GM23248 (cell line): ENCODE measurements at regions of chr1 and their contacts with region 1.

Region 1: GRCh38 chr1:179809506-179810366 is 66.6 kb downstream of the FAM163A start:
- DNase-seq: peak; percentile 78
- H3K4me3 ChIP-seq: no peak overlapping the region
- H3K27ac ChIP-seq: no peak overlapping the region
- H3K4me1 ChIP-seq: no peaks in the 10 kb centered on the region
- H3K27me3 ChIP-seq: peaks cover 15% of the 10 kb centered on the region; the same call in 1 of the 2 replicates

Region 2: GRCh38 chr1:179575497-179576314 is 234.0 kb before region 1 on chr1 and contains the start of gene NPHS2:
- in situ Hi-C with region 1: no loop called
- DNase-seq: no peak
- H3K4me3 ChIP-seq: no peak within 1 kb of the TSS
- H3K27ac ChIP-seq: no peak within 1 kb of the TSS
- H3K4me1 ChIP-seq: no peaks in the 10 kb centered on the region
- H3K27me3 ChIP-seq: peaks cover 37% of the 10 kb centered on the region
- total RNA-seq, gene NPHS2: not detected in 2 replicates

Region 3: DNA sequence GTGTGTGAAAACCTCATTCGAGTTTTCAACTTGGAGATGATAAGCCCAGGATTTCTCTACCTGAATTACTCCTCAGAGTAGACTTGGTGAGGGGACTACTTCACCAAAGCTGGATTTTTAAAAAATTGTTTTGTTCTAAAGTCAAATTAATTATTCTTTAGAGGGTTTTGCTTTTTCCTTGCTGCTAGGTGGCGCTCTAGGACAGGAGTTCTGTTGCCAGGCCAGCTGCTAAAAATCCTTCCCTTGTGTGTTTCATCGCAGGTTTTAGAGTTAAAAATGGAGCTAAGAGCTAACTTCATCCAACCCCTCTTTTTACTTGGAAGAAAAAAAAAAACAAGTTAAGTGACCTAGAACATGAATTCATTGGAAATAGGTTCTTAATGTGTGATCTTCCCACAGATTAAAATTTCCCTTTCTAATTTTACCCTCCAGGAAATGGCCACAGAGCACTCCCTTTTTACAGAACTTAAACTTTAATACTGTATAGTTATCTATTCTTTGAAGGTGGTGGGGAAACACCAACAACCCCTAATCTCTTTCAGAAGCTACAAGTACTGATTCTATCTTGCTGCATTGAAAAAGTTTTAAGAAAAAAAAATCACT is 103.3 kb before region 1 on chr1:
- in situ Hi-C with region 1: loop called (anchors 5 kb)
- DNase-seq: peak; percentile 70
- H3K4me3 ChIP-seq: no peak overlapping the region
- H3K27ac ChIP-seq: no peak overlapping the region
- H3K4me1 ChIP-seq: peaks cover 5% of the 10 kb centered on the region; the same call in 1 of the 2 replicates
- H3K27me3 ChIP-seq: peaks cover 9% of the 10 kb centered on the region; the same call in 1 of the 2 replicates

Region 4: DNA sequence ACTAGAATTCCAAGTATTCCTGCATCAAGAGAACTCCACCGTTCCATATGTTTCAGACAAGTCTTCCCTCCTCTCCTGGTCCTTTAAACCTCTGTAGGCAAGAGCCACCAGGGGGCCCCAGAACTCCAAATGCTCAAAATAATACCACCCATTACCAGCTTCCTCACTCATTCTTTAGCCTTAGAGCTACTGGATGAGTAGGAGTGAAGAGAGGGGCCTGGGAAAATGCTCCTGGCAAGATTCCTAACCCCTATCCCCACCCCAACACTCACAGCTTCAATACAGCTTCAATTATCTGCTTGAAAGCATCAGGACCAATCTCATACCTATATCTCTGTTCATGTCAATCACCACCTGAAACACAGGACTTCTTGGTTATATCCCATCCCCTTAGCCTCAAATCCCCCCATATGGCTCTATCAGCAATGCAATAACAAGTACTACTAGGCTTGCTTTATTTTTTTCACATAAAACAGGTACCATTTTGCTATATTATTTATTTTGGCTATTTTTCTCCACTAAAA is 58.1 kb after region 1 on chr1:
- in situ Hi-C with region 1: no loop called
- DNase-seq: peak; percentile 78
- H3K4me3 ChIP-seq: no peak overlapping the region
- H3K27ac ChIP-seq: no peak overlapping the region
- H3K4me1 ChIP-seq: 0 out of 2 replicates have a peak, but pooled peaks cover 12% of the 10 kb centered on the region
- H3K27me3 ChIP-seq: no peaks in the 10 kb centered on the region

Region 5: DNA sequence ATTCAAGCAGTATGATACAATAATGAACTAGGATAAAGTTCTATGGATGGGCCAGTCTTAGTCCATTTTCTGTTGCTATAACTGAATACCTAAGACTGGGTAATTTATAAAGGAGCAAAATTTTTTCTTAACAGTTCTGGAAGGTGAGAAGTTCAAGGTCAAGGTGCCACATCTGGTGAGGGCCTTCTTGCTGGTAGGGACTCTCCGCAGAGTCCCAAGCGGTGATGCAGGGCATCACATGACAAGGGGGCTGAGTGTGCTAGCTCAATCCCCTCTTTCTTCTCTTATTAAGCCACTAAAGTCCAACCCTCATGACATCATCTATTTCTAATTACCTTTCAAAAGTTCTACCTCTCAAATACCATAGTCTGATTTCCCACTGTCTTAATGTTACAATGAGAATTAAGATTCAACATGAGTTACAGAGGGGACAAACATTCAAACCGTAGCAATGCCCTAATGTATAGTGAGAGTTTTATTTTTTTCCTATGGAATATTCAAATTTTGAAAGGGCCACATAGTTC is 252.8 kb after region 1 on chr1:
- in situ Hi-C with region 1: no loop called
- DNase-seq: no peak
- H3K4me3 ChIP-seq: no peak overlapping the region
- H3K27ac ChIP-seq: no peak overlapping the region
- H3K4me1 ChIP-seq: no peaks in the 10 kb centered on the region
- H3K27me3 ChIP-seq: no peaks in the 10 kb centered on the region